ENCODE measurements at regions of chr1 and their contacts with region 1.

Region 1: DNA sequence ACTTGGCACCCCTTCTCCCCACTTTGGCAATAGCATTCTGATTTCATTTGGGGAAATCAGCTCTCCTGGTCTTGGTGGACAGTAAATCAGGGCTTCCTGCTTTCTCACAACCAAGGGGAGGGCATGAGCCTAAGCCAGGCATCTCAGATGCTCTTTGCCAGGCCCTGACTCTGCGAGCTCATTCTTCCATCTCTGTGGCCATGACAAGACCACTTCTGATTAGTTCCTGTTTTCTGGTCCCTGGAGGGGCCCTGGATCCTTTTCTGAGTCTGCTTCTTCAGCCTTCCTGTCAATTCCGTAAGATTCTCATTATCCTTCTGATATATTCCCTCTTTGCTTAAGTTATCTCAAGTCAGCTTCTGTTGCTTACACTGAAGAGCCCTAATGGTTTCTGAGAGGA is 210.4 kb downstream of the HIVEP3 start:
- DNase-seq: peak in 2 of 3 donors; percentile 58 to 64
- H3K4me3 ChIP-seq: no peak overlapping the region
- H3K27ac ChIP-seq: no peak overlapping the region
- H3K4me1 ChIP-seq: peaks cover 0 to 21% (median 12%) of the 10 kb centered on the region in 4 experiments
- H3K27me3 ChIP-seq: no peaks in the 10 kb centered on the region

Region 2: GRCh38 chr1:41583658-41584547 is 124.4 kb before region 1 on chr1:
- CTCF ChIA-PET with region 1: no interaction called
- POLR2A ChIA-PET with region 1: no interaction called
- DNase-seq: no peak
- H3K4me3 ChIP-seq: no peak overlapping the region
- H3K27ac ChIP-seq: no peak overlapping the region
- H3K4me1 ChIP-seq: peaks cover 0 to 19% (median 12%) of the 10 kb centered on the region in 4 experiments
- H3K27me3 ChIP-seq: no peaks in the 10 kb centered on the region

Region 3: GRCh38 chr1:41622859-41623723 is 85.2 kb before region 1 on chr1:
- CTCF ChIA-PET with region 1: no interaction called
- POLR2A ChIA-PET with region 1: no interaction called
- DNase-seq: peak in 1 of 3 donors; percentile 1
- H3K4me3 ChIP-seq: no peak overlapping the region
- H3K27ac ChIP-seq: no peak overlapping the region
- H3K4me1 ChIP-seq: peaks cover 0 to 13% (median 8%) of the 10 kb centered on the region in 4 experiments
- H3K27me3 ChIP-seq: no peaks in the 10 kb centered on the region

Region 4: GRCh38 chr1:41679531-41679930 is 28.8 kb before region 1 on chr1:
- CTCF ChIA-PET with region 1: interaction called, 11 read pairs
- POLR2A ChIA-PET with region 1: no interaction called
- DNase-seq: no peak
- H3K4me3 ChIP-seq: no peak overlapping the region
- H3K27ac ChIP-seq: no peak overlapping the region
- H3K4me1 ChIP-seq: peaks cover 10 to 25% (median 20%) of the 10 kb centered on the region in 4 experiments
- H3K27me3 ChIP-seq: no peaks in the 10 kb centered on the region

Region 5: GRCh38 chr1:41751804-41752513 is 43.6 kb after region 1 on chr1:
- CTCF ChIA-PET with region 1: no interaction called
- POLR2A ChIA-PET with region 1: no interaction called
- DNase-seq: peak in 2 of 3 donors; percentile 28 to 34
- H3K4me3 ChIP-seq: peak overlapping the region in 1 of 7 experiments; percentile 39
- H3K27ac ChIP-seq: no peak overlapping the region
- H3K4me1 ChIP-seq: peaks cover 6 to 44% (median 35%) of the 10 kb centered on the region in 4 experiments
- H3K27me3 ChIP-seq: no peaks in the 10 kb centered on the region

Measured in common myeloid progenitor, CD34-positive (primary cell).